ENCODE measurements at regions of chr6 and their contacts with region 1.

Region 1: GRCh38 chr6:15621203-15622044 is 41.4 kb downstream of the DTNBP1 start:
- DNase-seq: peak; percentile 34 to 45
- ATAC-seq: peak; percentile 83 to 94 (median 90)
- H3K4me3 ChIP-seq: no peak overlapping the region
- H3K27ac ChIP-seq: peak overlapping the region; percentile 46 to 80 (median 75)
- H3K4me1 ChIP-seq: peaks cover 0 to 41% (median 33%) of the 10 kb centered on the region in 9 donors
- H3K27me3 ChIP-seq: no peaks in the 10 kb centered on the region
- CTCF ChIP-seq: no peak

Region 2: DNA sequence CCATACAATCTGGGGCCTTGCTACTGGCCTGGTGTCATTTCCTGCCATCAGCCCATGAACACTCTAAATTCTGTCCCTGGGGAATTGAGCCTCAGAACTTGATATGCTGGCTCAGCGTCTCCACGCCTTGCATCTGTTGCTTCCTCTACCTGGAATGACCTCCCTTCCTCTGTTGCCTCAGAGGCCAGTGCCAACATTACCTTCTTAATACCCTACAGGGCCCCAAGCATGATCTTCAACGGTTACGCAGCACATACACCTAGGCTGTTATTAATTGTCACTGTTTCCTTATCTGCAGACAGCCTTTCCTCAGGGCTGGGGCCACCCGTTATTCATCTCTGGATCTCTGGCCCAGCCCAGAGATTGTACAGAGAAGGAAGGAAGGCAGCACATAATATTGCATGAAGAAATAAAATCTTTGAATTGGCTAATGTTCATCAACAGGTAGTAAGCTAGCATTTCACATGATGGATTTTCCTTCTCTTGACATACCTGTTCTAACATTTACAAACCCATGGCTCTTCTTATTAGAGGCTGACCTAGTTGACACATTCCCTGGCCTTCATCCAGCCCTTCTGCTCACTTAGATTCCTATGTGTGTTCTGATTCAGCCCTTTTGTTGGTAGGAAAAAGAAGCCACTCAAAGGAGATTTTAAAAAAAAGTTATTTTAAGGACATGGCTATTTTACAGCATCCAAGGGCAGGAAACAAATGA is 1705.0 kb before region 1 on chr6:
- intact Hi-C with region 1: loop called in 1 of 10 experiments (anchors 10 kb)
- DNase-seq: no peak
- ATAC-seq: no peak
- H3K4me3 ChIP-seq: no peak overlapping the region
- H3K27ac ChIP-seq: no peak overlapping the region
- H3K4me1 ChIP-seq: peaks cover 0 to 4% (median 0%) of the 10 kb centered on the region in 9 donors
- H3K27me3 ChIP-seq: peaks cover 0 to 52% (median 14%) of the 10 kb centered on the region in 7 donors
- CTCF ChIP-seq: no peak

Region 3: GRCh38 chr6:14200047-14200446 is 1421.4 kb before region 1 on chr6:
- intact Hi-C with region 1: loop called in 3 of 10 experiments (anchors 5 to 10 kb)
- DNase-seq: no peak
- ATAC-seq: no peak
- H3K4me3 ChIP-seq: no peak overlapping the region
- H3K27ac ChIP-seq: no peak overlapping the region
- H3K4me1 ChIP-seq: peaks cover 0 to 6% (median 0%) of the 10 kb centered on the region in 9 donors
- H3K27me3 ChIP-seq: no peaks in the 10 kb centered on the region
- CTCF ChIP-seq: no peak

Region 4: DNA sequence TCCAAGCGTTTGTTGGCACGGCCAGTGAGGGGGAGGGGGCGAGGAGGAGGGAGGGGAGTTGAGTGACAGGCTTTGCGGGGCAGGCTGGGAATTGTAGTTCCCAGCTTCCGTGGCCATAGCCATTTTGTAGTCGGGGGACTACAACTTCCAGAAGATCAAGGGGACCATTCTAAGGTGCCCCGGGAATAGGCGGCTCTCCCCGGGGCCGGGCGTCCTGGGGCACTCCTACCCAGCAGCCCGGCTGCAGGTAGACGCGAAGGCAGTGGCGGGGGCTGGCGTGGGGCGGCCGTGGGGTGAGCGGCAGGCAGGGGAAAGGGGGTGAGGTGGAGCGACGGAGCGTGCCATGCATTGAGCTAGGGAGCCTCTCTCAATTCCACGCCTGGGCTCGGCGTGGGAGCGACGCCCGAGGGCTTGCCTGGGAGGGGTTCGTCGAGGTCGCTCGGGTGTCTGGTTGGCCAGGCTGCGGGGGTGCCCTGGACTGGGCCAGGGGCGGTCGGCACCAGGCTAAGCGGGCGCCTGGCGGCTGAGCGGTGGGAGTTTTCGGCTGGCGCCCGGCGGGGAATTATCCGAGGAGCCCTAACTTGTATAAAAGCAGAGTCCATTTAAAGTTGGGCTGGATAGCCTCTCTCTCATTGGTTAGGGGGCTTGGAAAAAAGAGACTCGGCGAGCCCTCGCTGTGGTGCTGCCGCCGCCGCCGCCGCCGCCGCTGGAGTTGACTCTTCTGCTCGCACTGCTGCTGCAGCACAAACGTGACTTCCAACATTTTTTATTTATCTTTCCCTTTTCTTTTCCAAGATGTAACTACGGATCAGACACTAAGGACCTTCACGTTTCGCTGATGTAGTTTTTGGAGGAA is 375.8 kb before region 1 on chr6 and contains the start of gene JARID2:
- intact Hi-C with region 1: loop called in 3 of 10 experiments (anchors 5 to 10 kb)
- DNase-seq: peak; percentile 99
- ATAC-seq: peak; percentile 83 to 93 (median 88)
- H3K4me3 ChIP-seq: peak within 1 kb of the TSS; percentile 56 to 90 (median 82)
- H3K27ac ChIP-seq: peak within 1 kb of the TSS; percentile 90 to 98 (median 94)
- H3K4me1 ChIP-seq: peaks cover 0 to 39% (median 30%) of the 10 kb centered on the region in 9 donors
- H3K27me3 ChIP-seq: no peaks in the 10 kb centered on the region
- CTCF ChIP-seq: peak in 1 of 9 donors; percentile 5
- total RNA-seq, gene JARID2: 5.8 to 11.6 (median 9.4) TPM

Region 5: GRCh38 chr6:15264902-15265761 is 356.3 kb before region 1 on chr6:
- intact Hi-C with region 1: loop called in 1 of 10 experiments (anchors 10 kb)
- DNase-seq: peak in 1 of 2 donors; percentile 42
- ATAC-seq: peak; percentile 45 to 79 (median 66)
- H3K4me3 ChIP-seq: peak overlapping the region in 4 of 10 donors; percentile 12 to 18 (median 14)
- H3K27ac ChIP-seq: peak overlapping the region in 9 of 10 donors; percentile 40 to 84 (median 70)
- H3K4me1 ChIP-seq: peaks cover 22 to 89% (median 77%) of the 10 kb centered on the region in 9 donors
- H3K27me3 ChIP-seq: no peaks in the 10 kb centered on the region
- CTCF ChIP-seq: no peak

Region 6: DNA sequence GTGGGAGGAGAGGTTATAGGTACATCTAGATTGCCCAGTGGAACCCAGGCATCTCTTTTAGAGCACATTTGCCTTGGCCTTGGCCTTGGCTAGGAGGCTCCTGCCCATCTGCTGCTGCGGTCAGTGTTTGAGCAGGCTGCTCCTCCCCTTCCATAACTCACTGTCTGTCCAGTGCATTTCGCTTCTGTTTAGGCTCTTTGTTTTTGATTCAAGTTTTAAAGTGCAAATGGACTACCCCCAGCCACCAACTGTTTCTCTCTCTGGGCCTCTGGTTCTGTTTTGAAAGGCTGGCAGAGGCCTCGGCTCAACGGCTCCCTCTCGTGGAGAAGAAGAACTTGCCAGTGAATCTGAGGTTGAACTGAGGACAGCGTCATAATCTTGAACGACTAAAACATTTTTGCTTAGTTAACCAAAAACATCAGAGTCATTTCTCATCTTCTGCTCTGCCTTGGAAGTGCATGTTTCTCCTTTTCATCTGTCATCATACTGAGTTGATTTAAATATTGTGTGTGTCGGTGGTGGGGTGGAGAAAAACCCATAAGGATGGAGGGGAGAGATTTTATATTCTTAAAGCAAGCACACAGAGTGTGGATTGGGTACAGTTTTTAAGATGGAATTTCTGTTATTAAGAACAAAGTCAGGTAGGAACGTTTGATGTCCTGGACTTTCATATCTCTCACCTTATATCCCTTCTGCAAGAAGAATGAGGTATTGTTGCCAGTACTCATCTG is 130.0 kb before region 1 on chr6:
- intact Hi-C with region 1: loop called in 1 of 10 experiments (anchors 5 kb)
- DNase-seq: peak; percentile 72 to 84
- ATAC-seq: peak in 7 of 8 donors; percentile 55 to 86 (median 78)
- H3K4me3 ChIP-seq: no peak overlapping the region
- H3K27ac ChIP-seq: peak overlapping the region in 5 of 10 donors; percentile 9 to 55 (median 36)
- H3K4me1 ChIP-seq: peaks cover 4 to 43% (median 29%) of the 10 kb centered on the region in 9 donors
- H3K27me3 ChIP-seq: no peaks in the 10 kb centered on the region
- CTCF ChIP-seq: peak; percentile 88 to 98 (median 97)

Region 7: DNA sequence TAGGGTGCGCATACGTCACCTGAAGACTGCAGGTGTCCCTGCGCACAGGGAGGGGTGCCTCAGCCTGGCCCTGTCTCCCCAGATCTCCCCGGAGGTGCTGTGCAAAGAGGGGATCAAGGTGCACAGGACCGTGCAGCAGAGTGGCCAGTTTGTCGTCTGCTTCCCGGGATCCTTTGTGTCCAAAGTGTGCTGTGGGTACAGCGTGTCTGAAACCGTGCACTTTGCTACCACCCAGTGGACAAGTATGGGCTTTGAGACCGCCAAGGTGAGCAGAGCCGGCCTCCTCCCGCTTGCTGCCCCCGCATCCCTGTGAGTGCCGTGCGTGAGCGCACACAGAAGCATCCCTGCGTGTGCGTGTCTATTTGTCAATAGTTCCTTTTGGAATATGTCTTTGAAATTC is 109.3 kb before region 1 on chr6:
- intact Hi-C with region 1: loop called in 8 of 10 experiments (anchors 1 to 10 kb)
- DNase-seq: peak in 1 of 2 donors; percentile 38
- ATAC-seq: peak; percentile 49 to 78 (median 67)
- H3K4me3 ChIP-seq: no peak overlapping the region
- H3K27ac ChIP-seq: peak overlapping the region in 9 of 10 donors; percentile 30 to 83 (median 61)
- H3K4me1 ChIP-seq: peaks cover 0 to 28% (median 13%) of the 10 kb centered on the region in 9 donors
- H3K27me3 ChIP-seq: no peaks in the 10 kb centered on the region
- CTCF ChIP-seq: peak in 7 of 9 donors; percentile 19 to 52 (median 42)